ENCODE measurements at regions of chr1 and their contacts with region 1.

Region 1: GRCh38 chr1:25971066-25971810 is 26.6 kb downstream of the PAFAH2 start:
- DNase-seq: peak; percentile 26
- ATAC-seq: peak; percentile 82
- H3K4me3 Mint-ChIP-seq: peak overlapping the region; percentile 16
- H3K27ac Mint-ChIP-seq: peak overlapping the region; percentile 80
- H3K4me1 Mint-ChIP-seq: peaks cover 19% of the 10 kb centered on the region
- H3K27me3 Mint-ChIP-seq: no peaks in the 10 kb centered on the region

Region 2: GRCh38 chr1:25990702-25991395 is 19.6 kb after region 1 on chr1:
- CTCF ChIA-PET with region 1: interaction called, 9 read pairs
- POLR2A ChIA-PET with region 1: interaction called, 14 read pairs
- DNase-seq: peak; percentile 68
- ATAC-seq: peak; percentile 92
- H3K4me3 Mint-ChIP-seq: peak overlapping the region; percentile 85
- H3K27ac Mint-ChIP-seq: peak overlapping the region; percentile 86
- H3K4me1 Mint-ChIP-seq: peaks cover 47% of the 10 kb centered on the region
- H3K27me3 Mint-ChIP-seq: no peaks in the 10 kb centered on the region

Region 3: GRCh38 chr1:26021647-26022403 is 50.6 kb after region 1 on chr1 and contains the start of gene EXTL1:
- CTCF ChIA-PET with region 1: no interaction called
- POLR2A ChIA-PET with region 1: no interaction called
- DNase-seq: no peak
- ATAC-seq: no peak
- H3K4me3 Mint-ChIP-seq: no peak within 1 kb of the TSS
- H3K27ac Mint-ChIP-seq: no peak within 1 kb of the TSS
- H3K4me1 Mint-ChIP-seq: peaks cover 26% of the 10 kb centered on the region
- H3K27me3 Mint-ChIP-seq: peaks cover 16% of the 10 kb centered on the region
- total RNA-seq, gene EXTL1: not detected

Region 4: GRCh38 chr1:26336477-26337205 is 365.4 kb after region 1 on chr1:
- CTCF ChIA-PET with region 1: no interaction called
- POLR2A ChIA-PET with region 1: no interaction called
- DNase-seq: peak; percentile 93
- ATAC-seq: peak; percentile 94
- H3K4me3 Mint-ChIP-seq: peak overlapping the region; percentile 94
- H3K27ac Mint-ChIP-seq: no peak overlapping the region
- H3K4me1 Mint-ChIP-seq: peaks cover 25% of the 10 kb centered on the region
- H3K27me3 Mint-ChIP-seq: peaks cover 5% of the 10 kb centered on the region

Measured in activated CD8-positive, alpha-beta T cell treated with anti-CD3 and anti-CD28 coated beads, Interleukin-2, amount 10 ng/mL, durations not matched to agents 7 days and 5 days (primary cell).